PC-3 (cell line): ENCODE measurements at regions of chr4 and their contacts with region 1.

Region 1: DNA sequence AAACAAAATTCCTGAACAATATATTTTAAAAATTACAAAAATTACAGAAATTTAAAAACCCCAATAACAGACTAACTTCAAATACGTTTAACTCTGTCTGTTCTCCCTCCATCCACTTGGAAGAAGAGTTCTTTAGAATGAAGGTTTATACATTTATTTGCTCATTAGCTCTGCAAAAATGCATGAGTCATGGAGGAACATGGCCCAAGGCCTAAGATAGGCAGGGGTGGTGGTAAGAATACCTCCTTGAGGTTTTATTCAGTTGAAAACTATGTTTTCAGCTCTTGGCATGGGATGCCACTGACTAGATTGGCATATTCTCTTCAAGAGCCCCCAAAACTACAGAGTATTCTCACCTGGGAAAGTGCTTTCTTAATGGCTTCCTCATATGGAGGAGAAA is 8.8 kb upstream of the LRRC66 start:
- DNase-seq: peak; percentile 96
- ATAC-seq: peak; percentile 99
- H3K4me3 ChIP-seq: no peak overlapping the region
- H3K27ac ChIP-seq: 0 out of 2 replicates have a peak overlapping the region, but pooled peaks have one; percentile 16
- H3K4me1 ChIP-seq: peaks cover 14% of the 10 kb centered on the region
- H3K27me3 ChIP-seq: no peaks in the 10 kb centered on the region
- CTCF ChIP-seq: no peak

Region 2: DNA sequence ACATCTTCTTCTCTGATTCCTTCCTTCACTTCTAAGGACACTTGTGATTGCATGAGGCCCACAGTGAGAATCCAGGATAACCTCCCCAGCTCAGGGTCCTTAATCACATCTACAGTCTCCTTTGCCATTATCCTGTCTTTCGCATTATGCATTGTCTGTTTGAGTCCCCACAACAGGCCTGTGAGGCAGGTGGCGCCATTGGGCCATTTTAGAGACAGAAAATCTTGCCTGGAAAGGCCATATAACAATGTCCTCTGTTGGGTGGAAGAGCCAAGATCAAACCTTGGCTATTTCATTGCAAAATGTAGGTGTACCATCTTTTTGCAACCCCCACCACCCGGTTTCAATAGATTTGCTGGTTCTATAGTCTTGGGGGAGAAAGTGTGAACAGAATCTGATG is 197.8 kb before region 1 on chr4:
- CTCF ChIA-PET with region 1: no interaction called
- POLR2A ChIA-PET with region 1: no interaction called
- intact Hi-C with region 1: loop called (anchors 1 kb)
- DNase-seq: peak; percentile 82
- ATAC-seq: peak; percentile 98
- H3K4me3 ChIP-seq: no peak overlapping the region
- H3K27ac ChIP-seq: no peak overlapping the region
- H3K4me1 ChIP-seq: no peaks in the 10 kb centered on the region
- H3K27me3 ChIP-seq: no peaks in the 10 kb centered on the region
- CTCF ChIP-seq: peak; percentile 95

Region 3: DNA sequence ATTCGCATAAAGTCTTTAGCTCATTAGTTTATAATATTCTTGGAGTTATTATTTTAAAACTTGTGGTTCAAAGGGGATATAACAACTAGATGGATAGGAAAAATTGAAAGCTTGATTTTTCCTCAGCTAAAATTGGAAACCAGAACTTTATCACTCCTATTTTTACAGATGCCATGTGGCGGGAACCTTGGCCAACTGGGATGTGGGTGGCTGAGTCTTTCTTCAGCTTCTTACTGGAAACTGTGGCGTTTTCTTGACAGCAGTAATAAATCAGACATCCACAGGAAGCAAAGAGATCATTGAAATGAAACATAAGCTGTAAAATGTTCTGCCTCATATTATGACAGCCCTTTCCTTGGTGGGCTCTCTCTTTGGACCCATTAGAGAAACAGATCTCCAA is 106.2 kb after region 1 on chr4:
- CTCF ChIA-PET with region 1: no interaction called
- POLR2A ChIA-PET with region 1: no interaction called
- intact Hi-C with region 1: loop called (anchors 2 kb)
- DNase-seq: no peak
- ATAC-seq: no peak
- H3K4me3 ChIP-seq: no peak overlapping the region
- H3K27ac ChIP-seq: no peak overlapping the region
- H3K4me1 ChIP-seq: no peaks in the 10 kb centered on the region
- H3K27me3 ChIP-seq: 0 out of 2 replicates have a peak, but pooled peaks cover 11% of the 10 kb centered on the region
- CTCF ChIP-seq: no peak

Region 4: GRCh38 chr4:52572936-52573485 is 544.0 kb after region 1 on chr4:
- CTCF ChIA-PET with region 1: no interaction called
- POLR2A ChIA-PET with region 1: no interaction called
- intact Hi-C with region 1: no loop called
- DNase-seq: peak; percentile 79
- ATAC-seq: peak; percentile 91
- H3K4me3 ChIP-seq: no peak overlapping the region
- H3K27ac ChIP-seq: no peak overlapping the region
- H3K4me1 ChIP-seq: peaks cover 14% of the 10 kb centered on the region
- H3K27me3 ChIP-seq: no peaks in the 10 kb centered on the region
- CTCF ChIP-seq: no peak